Tibial artery (tissue), 4 donors: ENCODE measurements at regions of chr7 and their contacts with region 1.

Region 1: GRCh38 chr7:86720306-86720705 is 76.6 kb downstream of the GRM3 start:
- DNase-seq: no peak
- H3K4me3 ChIP-seq: no peak overlapping the region
- H3K27ac ChIP-seq: no peak overlapping the region
- H3K4me1 ChIP-seq: no peaks in the 10 kb centered on the region
- H3K27me3 ChIP-seq: no peaks in the 10 kb centered on the region
- CTCF ChIP-seq: no peak

Region 2: DNA sequence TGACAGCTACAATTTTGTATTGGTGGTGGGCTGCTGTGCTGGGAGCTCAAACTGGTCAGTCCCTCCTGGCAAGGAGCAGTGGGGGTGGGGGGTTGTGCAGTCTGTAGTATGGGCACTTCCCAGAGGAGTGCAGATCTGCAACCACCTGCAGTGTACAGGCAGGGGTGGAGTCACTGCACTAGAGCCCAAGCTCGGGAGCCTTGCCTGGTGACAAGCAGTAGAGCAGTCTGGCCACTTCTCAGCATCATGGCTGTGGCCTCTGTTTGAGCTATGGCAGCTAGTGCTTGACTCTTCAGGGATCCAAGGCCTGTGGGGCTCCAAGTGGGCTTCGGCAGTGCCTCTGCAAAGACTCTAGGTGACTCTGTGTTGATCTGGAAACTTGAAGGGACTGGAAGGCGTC is 661.7 kb before region 1 on chr7:
- intact Hi-C with region 1: loop called (anchors 10 kb)
- DNase-seq: no peak
- H3K4me3 ChIP-seq: no peak overlapping the region
- H3K27ac ChIP-seq: no peak overlapping the region
- H3K4me1 ChIP-seq: no peaks in the 10 kb centered on the region
- H3K27me3 ChIP-seq: no peaks in the 10 kb centered on the region
- CTCF ChIP-seq: no peak

Region 3: GRCh38 chr7:86867163-86867762 is 147.0 kb after region 1 on chr7:
- intact Hi-C with region 1: no loop called
- DNase-seq: no peak
- H3K4me3 ChIP-seq: no peak overlapping the region
- H3K27ac ChIP-seq: no peak overlapping the region
- H3K4me1 ChIP-seq: no peaks in the 10 kb centered on the region
- H3K27me3 ChIP-seq: no peaks in the 10 kb centered on the region
- CTCF ChIP-seq: no peak